ENCODE measurements at regions of chrX and their contacts with region 1.

Region 1: GRCh38 chrX:78139160-78140123 is at the start of gene TAF9B:
- DNase-seq: peak; percentile 80 to 89 (median 83)
- H3K4me3 ChIP-seq: peak within 1 kb of the TSS; percentile 29 to 67
- H3K4me3 Mint-ChIP-seq: peak within 1 kb of the TSS; percentile 91 to 97 (median 94)
- H3K27ac ChIP-seq: peak within 1 kb of the TSS; percentile 85
- H3K27ac Mint-ChIP-seq: peak within 1 kb of the TSS; percentile 89 to 97 (median 95)
- H3K4me1 ChIP-seq: peaks cover 6% of the 10 kb centered on the region
- H3K4me1 Mint-ChIP-seq: peaks cover 3 to 7% (median 5%) of the 10 kb centered on the region in 4 donors
- H3K27me3 ChIP-seq: no peaks in the 10 kb centered on the region
- H3K27me3 Mint-ChIP-seq: no peaks in the 10 kb centered on the region
- total RNA-seq, gene TAF9B: 23.6 to 28.3 TPM

Region 2: GRCh38 chrX:78333521-78333920 is 194.1 kb after region 1 on chrX:
- CTCF ChIA-PET with region 1: interaction called, 3 read pairs
- POLR2A ChIA-PET with region 1: no interaction called
- intact Hi-C with region 1: loop called (anchors 5 kb)
- DNase-seq: peak; percentile 55 to 79 (median 69)
- H3K4me3 ChIP-seq: no peak overlapping the region
- H3K4me3 Mint-ChIP-seq: peak overlapping the region in 4 of 8 donors; percentile 4 to 70 (median 60)
- H3K27ac ChIP-seq: peak overlapping the region; percentile 53
- H3K27ac Mint-ChIP-seq: peak overlapping the region; percentile 86 to 95 (median 93)
- H3K4me1 ChIP-seq: peaks cover 74% of the 10 kb centered on the region
- H3K4me1 Mint-ChIP-seq: peaks cover 38 to 81% (median 54%) of the 10 kb centered on the region in 4 donors
- H3K27me3 ChIP-seq: no peaks in the 10 kb centered on the region
- H3K27me3 Mint-ChIP-seq: no peaks in the 10 kb centered on the region

Region 3: GRCh38 chrX:79259073-79259689 is 1119.7 kb after region 1 on chrX:
- CTCF ChIA-PET with region 1: no interaction called
- POLR2A ChIA-PET with region 1: no interaction called
- intact Hi-C with region 1: loop called (anchors 10 kb)
- DNase-seq: peak; percentile 71 to 82 (median 77)
- H3K4me3 ChIP-seq: no peak overlapping the region
- H3K4me3 Mint-ChIP-seq: peak overlapping the region; percentile 46 to 87 (median 66)
- H3K27ac ChIP-seq: peak overlapping the region; percentile 58
- H3K27ac Mint-ChIP-seq: peak overlapping the region; percentile 86 to 96 (median 94)
- H3K4me1 ChIP-seq: peaks cover 89% of the 10 kb centered on the region
- H3K4me1 Mint-ChIP-seq: peaks cover 51 to 86% (median 68%) of the 10 kb centered on the region in 4 donors
- H3K27me3 ChIP-seq: no peaks in the 10 kb centered on the region
- H3K27me3 Mint-ChIP-seq: no peaks in the 10 kb centered on the region